ENCODE measurements at regions of chr9 and their contacts with region 1.

Region 1: GRCh38 chr9:18442629-18443491 is 31.1 kb upstream of the ADAMTSL1 start:
- DNase-seq: peak; percentile 54 to 80 (median 76)
- H3K4me3 ChIP-seq: no peak overlapping the region
- H3K27ac ChIP-seq: no peak overlapping the region
- H3K4me1 ChIP-seq: peaks cover 0 to 5% (median 4%) of the 10 kb centered on the region in 4 experiments
- H3K27me3 ChIP-seq: peaks cover 2 to 49% (median 23%) of the 10 kb centered on the region in 5 experiments

Region 2: GRCh38 chr9:18255158-18255629 is 187.7 kb before region 1 on chr9:
- CTCF ChIA-PET with region 1: interaction called, 10 read pairs
- POLR2A ChIA-PET with region 1: no interaction called
- DNase-seq: peak; percentile 75 to 88 (median 81)
- H3K4me3 ChIP-seq: no peak overlapping the region
- H3K27ac ChIP-seq: no peak overlapping the region
- H3K4me1 ChIP-seq: no peaks in the 10 kb centered on the region
- H3K27me3 ChIP-seq: peaks cover 6 to 67% (median 19%) of the 10 kb centered on the region in 5 experiments

Measured in common myeloid progenitor, CD34-positive (primary cell).